Ovary (tissue), 10 donors: ENCODE measurements at regions of chr5 and their contacts with region 1.

Region 1: DNA sequence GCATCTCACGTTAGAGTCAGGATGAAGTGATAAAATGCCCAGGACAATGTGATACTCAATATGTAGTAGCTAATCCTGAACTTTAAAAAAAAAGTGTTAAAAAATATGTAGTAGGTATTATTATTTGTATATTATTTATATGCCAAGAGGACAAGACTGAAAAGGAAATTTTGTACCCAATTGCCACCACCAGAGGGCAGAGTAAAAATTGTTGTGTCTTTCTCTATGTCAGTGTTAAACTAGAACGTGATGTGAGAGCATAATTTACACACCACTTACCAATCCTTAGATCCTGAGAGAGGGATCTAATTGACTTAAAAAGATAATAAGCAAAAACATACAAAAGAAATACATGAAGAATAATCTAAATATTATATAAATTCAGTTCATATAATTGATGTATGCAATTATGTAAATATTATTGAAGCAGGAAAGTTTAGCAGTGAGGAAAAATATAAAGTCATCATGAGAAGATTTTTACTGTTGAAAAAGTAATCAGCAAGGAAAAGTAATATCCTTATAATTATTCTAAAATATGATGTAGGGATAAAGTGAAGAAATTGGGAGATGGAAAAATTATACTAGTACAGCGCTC is 288.9 kb downstream of the RAB3C start:
- DNase-seq: peak in 1 of 5 donors; percentile 39
- H3K4me3 ChIP-seq: no peak overlapping the region
- H3K27ac ChIP-seq: no peak overlapping the region
- H3K4me1 ChIP-seq: no peaks in the 10 kb centered on the region
- H3K27me3 ChIP-seq: no peaks in the 10 kb centered on the region
- CTCF ChIP-seq: peak in 1 of 3 donors; percentile 44
- EP300 ChIP-seq: no peak
- POLR2A ChIP-seq: no peak

Region 2: GRCh38 chr5:58348996-58349961 is 522.5 kb before region 1 on chr5:
- intact Hi-C with region 1: no loop called
- DNase-seq: no peak
- H3K4me3 ChIP-seq: no peak overlapping the region
- H3K27ac ChIP-seq: no peak overlapping the region
- H3K4me1 ChIP-seq: no peaks in the 10 kb centered on the region
- H3K27me3 ChIP-seq: no peaks in the 10 kb centered on the region
- CTCF ChIP-seq: no peak
- EP300 ChIP-seq: no peak
- POLR2A ChIP-seq: no peak

Region 3: DNA sequence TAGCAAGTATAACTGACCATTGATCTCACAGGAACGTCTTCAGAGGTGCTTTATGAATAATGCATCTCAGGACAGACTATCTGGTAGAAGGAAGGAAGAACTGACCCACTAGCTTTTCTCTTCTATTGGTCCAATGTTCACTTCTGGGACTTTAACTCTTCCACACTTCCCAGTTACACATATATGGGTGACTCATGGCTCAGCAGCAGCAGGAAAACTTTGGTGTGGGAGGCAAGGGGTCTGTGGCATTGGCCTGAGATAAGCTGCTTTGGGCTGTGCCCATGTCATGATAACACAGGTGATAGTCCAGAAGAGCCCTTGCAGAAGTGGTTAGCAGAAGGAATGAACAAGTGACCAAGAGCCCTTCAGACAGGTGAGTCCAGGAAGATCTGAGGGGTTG is 140.1 kb before region 1 on chr5:
- intact Hi-C with region 1: no loop called
- DNase-seq: no peak
- H3K4me3 ChIP-seq: no peak overlapping the region
- H3K27ac ChIP-seq: no peak overlapping the region
- H3K4me1 ChIP-seq: no peaks in the 10 kb centered on the region
- H3K27me3 ChIP-seq: no peaks in the 10 kb centered on the region
- CTCF ChIP-seq: no peak
- EP300 ChIP-seq: no peak
- POLR2A ChIP-seq: no peak

Region 4: DNA sequence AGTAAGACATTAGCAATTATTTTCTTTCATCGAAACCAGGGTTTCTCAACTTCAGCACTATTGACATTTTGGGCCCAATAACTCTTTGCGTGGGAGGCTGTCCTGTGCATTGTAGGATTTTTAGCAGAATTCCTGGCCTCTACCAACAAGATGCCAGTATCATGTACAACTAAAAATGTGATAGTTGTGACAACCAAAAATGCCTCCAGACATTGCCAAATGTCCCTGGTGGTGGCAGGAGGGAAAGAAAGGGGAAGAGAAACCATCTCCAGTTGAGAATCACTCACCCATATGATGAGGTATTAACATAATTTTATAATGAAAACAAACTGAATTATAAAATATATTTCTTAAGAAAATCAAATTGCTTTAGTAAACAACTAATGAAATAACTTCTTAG is 117.2 kb after region 1 on chr5:
- intact Hi-C with region 1: no loop called
- DNase-seq: no peak
- H3K4me3 ChIP-seq: no peak overlapping the region
- H3K27ac ChIP-seq: no peak overlapping the region
- H3K4me1 ChIP-seq: no peaks in the 10 kb centered on the region
- H3K27me3 ChIP-seq: no peaks in the 10 kb centered on the region
- CTCF ChIP-seq: no peak
- EP300 ChIP-seq: no peak
- POLR2A ChIP-seq: no peak

Region 5: GRCh38 chr5:59007460-59008063 is 135.8 kb after region 1 on chr5:
- intact Hi-C with region 1: loop called in 1 of 4 experiments (anchors 5 kb)
- DNase-seq: no peak
- H3K4me3 ChIP-seq: no peak overlapping the region
- H3K27ac ChIP-seq: no peak overlapping the region
- H3K4me1 ChIP-seq: no peaks in the 10 kb centered on the region
- H3K27me3 ChIP-seq: no peaks in the 10 kb centered on the region
- CTCF ChIP-seq: peak in 1 of 3 donors; percentile 56
- EP300 ChIP-seq: no peak
- POLR2A ChIP-seq: no peak

Region 6: GRCh38 chr5:59174248-59174844 is 302.6 kb after region 1 on chr5:
- intact Hi-C with region 1: loop called in 1 of 4 experiments (anchors 10 kb)
- DNase-seq: peak in 1 of 5 donors; percentile 31
- H3K4me3 ChIP-seq: no peak overlapping the region
- H3K27ac ChIP-seq: no peak overlapping the region
- H3K4me1 ChIP-seq: no peaks in the 10 kb centered on the region
- H3K27me3 ChIP-seq: no peaks in the 10 kb centered on the region
- CTCF ChIP-seq: peak in 2 of 3 donors; percentile 16 to 68
- EP300 ChIP-seq: no peak
- POLR2A ChIP-seq: no peak